Activated CD4-positive, alpha-beta memory T cell treated with anti-CD3 and anti-CD28 coated beads, Interleukin-2, amount 10 ng/mL, durations not matched to agents 7 days and 5 days (primary cell): ENCODE measurements at regions of chr3 and their contacts with region 1.

Region 1: GRCh38 chr3:158539414-158540014 is 31.5 kb upstream of the MLF1 start:
- DNase-seq: peak; percentile 31
- H3K4me3 Mint-ChIP-seq: no peak overlapping the region
- H3K27ac Mint-ChIP-seq: no peak overlapping the region
- H3K4me1 Mint-ChIP-seq: no peaks in the 10 kb centered on the region
- H3K27me3 Mint-ChIP-seq: no peaks in the 10 kb centered on the region

Region 2: DNA sequence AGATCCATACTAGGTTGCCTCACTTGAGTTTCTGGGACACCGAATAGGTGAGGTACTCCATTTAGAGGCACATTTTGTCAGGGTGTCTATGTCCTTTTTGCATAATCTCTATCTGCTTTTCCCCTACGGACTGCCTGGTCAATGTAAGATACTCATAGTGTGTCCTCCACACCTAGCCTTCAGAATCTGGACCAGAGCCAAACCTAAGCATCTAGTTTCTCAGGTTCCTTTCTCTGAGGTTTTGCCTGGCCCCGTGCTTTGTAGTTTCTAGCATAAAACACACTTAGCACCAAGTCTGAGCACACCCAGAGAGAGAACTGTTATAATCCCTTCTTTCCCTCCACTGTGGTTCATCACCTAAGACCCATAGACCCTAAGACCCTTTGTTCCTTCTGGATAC is 74.4 kb before region 1 on chr3:
- CTCF ChIA-PET with region 1: no interaction called
- POLR2A ChIA-PET with region 1: no interaction called
- DNase-seq: no peak
- H3K4me3 Mint-ChIP-seq: no peak overlapping the region
- H3K27ac Mint-ChIP-seq: no peak overlapping the region
- H3K4me1 Mint-ChIP-seq: no peaks in the 10 kb centered on the region
- H3K27me3 Mint-ChIP-seq: no peaks in the 10 kb centered on the region

Region 3: GRCh38 chr3:158552124-158552523 is 12.6 kb after region 1 on chr3:
- CTCF ChIA-PET with region 1: interaction called, 12 read pairs
- POLR2A ChIA-PET with region 1: no interaction called
- DNase-seq: no peak
- H3K4me3 Mint-ChIP-seq: no peak overlapping the region
- H3K27ac Mint-ChIP-seq: no peak overlapping the region
- H3K4me1 Mint-ChIP-seq: no peaks in the 10 kb centered on the region
- H3K27me3 Mint-ChIP-seq: no peaks in the 10 kb centered on the region

Region 4: DNA sequence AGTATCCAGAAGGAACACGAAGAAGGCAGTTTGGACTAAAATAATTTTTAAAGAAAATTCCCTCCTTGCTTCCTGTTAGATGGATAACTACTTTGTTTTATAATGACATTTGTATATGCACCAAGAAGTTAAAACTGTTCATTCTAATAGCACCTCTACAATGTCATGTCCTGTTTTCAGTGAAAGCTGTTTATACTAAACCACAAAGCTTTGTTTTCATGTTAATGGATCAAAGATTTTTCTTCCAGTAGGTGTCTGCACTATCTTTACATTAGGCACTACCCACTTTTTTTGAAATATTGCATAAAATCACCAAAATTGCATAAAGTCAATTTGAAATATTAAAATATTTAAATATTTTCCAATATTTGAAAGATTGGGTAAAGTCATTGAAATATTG is 182.6 kb after region 1 on chr3:
- CTCF ChIA-PET with region 1: no interaction called
- POLR2A ChIA-PET with region 1: no interaction called
- DNase-seq: no peak
- H3K4me3 Mint-ChIP-seq: no peak overlapping the region
- H3K27ac Mint-ChIP-seq: no peak overlapping the region
- H3K4me1 Mint-ChIP-seq: peaks cover 23% of the 10 kb centered on the region
- H3K27me3 Mint-ChIP-seq: no peaks in the 10 kb centered on the region